ENCODE measurements at regions of chr12 and their contacts with region 1.

Region 1: DNA sequence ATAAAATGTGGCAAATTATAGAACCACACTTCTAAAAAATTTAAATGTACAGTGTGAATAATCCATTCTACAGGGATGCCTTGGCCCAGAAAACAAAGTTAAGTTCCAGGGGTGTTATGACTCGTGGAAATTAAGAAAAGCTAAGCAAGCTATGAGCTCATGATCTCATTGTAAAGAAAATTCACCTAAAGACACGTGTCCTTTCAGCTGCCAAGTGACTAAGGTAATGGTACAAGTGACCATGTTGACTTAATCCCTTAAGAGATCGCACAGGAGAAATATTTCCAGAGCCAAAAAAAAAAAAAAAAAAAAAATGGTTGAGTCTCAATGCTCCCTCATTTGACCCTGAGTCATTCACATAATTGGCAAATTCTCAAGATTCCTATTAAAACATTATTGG is 51.4 kb upstream of the ANO2 start:
- DNase-seq: no peak
- ATAC-seq: no peak
- H3K4me3 ChIP-seq: no peak overlapping the region
- H3K27ac ChIP-seq: no peak overlapping the region
- H3K4me1 ChIP-seq: peaks cover 0 to 5% (median 0%) of the 10 kb centered on the region in 9 donors
- H3K27me3 ChIP-seq: peaks cover 0 to 19% (median 0%) of the 10 kb centered on the region in 7 donors
- CTCF ChIP-seq: no peak

Region 2: GRCh38 chr12:6039894-6040568 is 43.6 kb after region 1 on chr12:
- intact Hi-C with region 1: loop called in 2 of 10 experiments (anchors 2 to 10 kb)
- DNase-seq: peak in 1 of 2 donors; percentile 67
- ATAC-seq: peak; percentile 43 to 85 (median 76)
- H3K4me3 ChIP-seq: no peak overlapping the region
- H3K27ac ChIP-seq: no peak overlapping the region
- H3K4me1 ChIP-seq: no peaks in the 10 kb centered on the region
- H3K27me3 ChIP-seq: no peaks in the 10 kb centered on the region
- CTCF ChIP-seq: peak; percentile 65 to 89 (median 84)